ENCODE measurements at regions of chr4 and their contacts with region 1.

Region 1: DNA sequence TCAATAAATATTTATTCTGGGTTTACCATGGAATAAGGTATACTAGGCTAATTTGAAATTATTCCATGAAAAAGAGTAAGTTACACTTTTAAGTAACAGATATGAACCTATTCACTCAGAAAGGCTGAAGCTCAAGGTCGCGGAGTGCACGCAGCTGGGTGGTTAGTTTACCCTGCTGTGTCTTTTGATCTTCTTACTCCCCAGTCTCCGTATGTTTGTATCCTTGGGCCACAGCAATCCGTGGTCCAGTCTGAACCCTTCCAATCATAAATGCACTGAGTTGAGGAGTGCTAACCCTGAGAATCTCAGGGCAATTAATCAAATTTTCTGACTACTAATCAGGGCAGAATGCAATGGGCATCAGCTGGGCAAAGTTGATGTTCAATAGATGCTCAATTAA is 33.9 kb downstream of the RPS3A start:
- DNase-seq: no peak
- ATAC-seq: no peak
- H3K4me3 ChIP-seq: no peak overlapping the region
- H3K4me3 Mint-ChIP-seq: no peak overlapping the region
- H3K27ac ChIP-seq: no peak overlapping the region
- H3K27ac Mint-ChIP-seq: no peak overlapping the region
- H3K4me1 ChIP-seq: no peaks in the 10 kb centered on the region
- H3K4me1 Mint-ChIP-seq: no peaks in the 10 kb centered on the region
- H3K27me3 ChIP-seq: no peaks in the 10 kb centered on the region
- H3K27me3 Mint-ChIP-seq: no peaks in the 10 kb centered on the region

Region 2: DNA sequence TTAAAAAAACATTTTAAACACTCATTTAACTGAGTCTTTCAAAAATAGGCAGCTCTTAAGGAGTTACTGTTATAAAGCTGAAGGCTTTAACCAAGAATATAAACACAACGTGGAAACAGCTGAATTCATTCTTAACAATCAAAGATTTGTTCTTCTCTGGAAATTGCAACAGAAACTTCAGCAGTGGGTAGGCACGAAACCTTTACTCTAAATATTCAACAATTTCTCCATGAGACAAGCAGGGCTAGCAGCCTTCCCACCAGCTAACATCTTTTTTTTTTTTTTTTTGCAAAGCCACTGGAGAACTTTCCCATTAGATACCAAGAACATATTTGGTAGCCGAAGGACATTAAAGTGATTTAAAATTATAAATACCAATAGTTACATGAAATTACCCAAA is 65.4 kb after region 1 on chr4:
- CTCF ChIA-PET with region 1: no interaction called
- POLR2A ChIA-PET with region 1: interaction called in 1 of 2 experiments, 10 read pairs
- DNase-seq: no peak
- ATAC-seq: no peak
- H3K4me3 ChIP-seq: no peak overlapping the region
- H3K4me3 Mint-ChIP-seq: no peak overlapping the region
- H3K27ac ChIP-seq: no peak overlapping the region
- H3K27ac Mint-ChIP-seq: no peak overlapping the region
- H3K4me1 ChIP-seq: no peaks in the 10 kb centered on the region
- H3K4me1 Mint-ChIP-seq: no peaks in the 10 kb centered on the region
- H3K27me3 ChIP-seq: peaks cover 0 to 13% of the 10 kb centered on the region in 2 experiments
- H3K27me3 Mint-ChIP-seq: peaks cover 7 to 8% of the 10 kb centered on the region in 2 donors

Region 3: GRCh38 chr4:151227731-151228130 is 94.4 kb after region 1 on chr4:
- CTCF ChIA-PET with region 1: no interaction called
- POLR2A ChIA-PET with region 1: no interaction called
- DNase-seq: no peak
- ATAC-seq: no peak
- H3K4me3 ChIP-seq: no peak overlapping the region
- H3K4me3 Mint-ChIP-seq: no peak overlapping the region
- H3K27ac ChIP-seq: no peak overlapping the region
- H3K27ac Mint-ChIP-seq: no peak overlapping the region
- H3K4me1 ChIP-seq: no peaks in the 10 kb centered on the region
- H3K4me1 Mint-ChIP-seq: no peaks in the 10 kb centered on the region
- H3K27me3 ChIP-seq: peaks cover 0 to 2% of the 10 kb centered on the region in 2 experiments
- H3K27me3 Mint-ChIP-seq: peaks cover 26 to 45% of the 10 kb centered on the region in 2 donors

Measured in T-cell (primary cell).